Ascending aorta (tissue), 2 donors: ENCODE measurements at regions of chr16 and their contacts with region 1.

Region 1: GRCh38 chr16:70746708-70747424 is 54.1 kb downstream of the VAC14 start:
- DNase-seq: peak; percentile 58 to 93
- H3K4me3 ChIP-seq: peak overlapping the region in 1 of 2 donors; percentile 2
- H3K27ac ChIP-seq: peak overlapping the region; percentile 91 to 92
- H3K4me1 ChIP-seq: peaks cover 13 to 49% of the 10 kb centered on the region in 2 donors
- H3K27me3 ChIP-seq: no peaks in the 10 kb centered on the region
- CTCF ChIP-seq: no peak

Region 2: GRCh38 chr16:70529051-70529777 is 217.7 kb before region 1 on chr16:
- intact Hi-C with region 1: loop called (anchors 5 kb)
- DNase-seq: no peak
- H3K4me3 ChIP-seq: no peak overlapping the region
- H3K27ac ChIP-seq: no peak overlapping the region
- H3K4me1 ChIP-seq: peaks cover 8 to 24% of the 10 kb centered on the region in 2 donors
- H3K27me3 ChIP-seq: no peaks in the 10 kb centered on the region
- CTCF ChIP-seq: peak; percentile 37 to 52 (median 51)

Region 3: GRCh38 chr16:70576431-70577255 is 170.2 kb before region 1 on chr16:
- intact Hi-C with region 1: loop called (anchors 10 kb)
- DNase-seq: peak in 1 of 2 donors; percentile 46
- H3K4me3 ChIP-seq: no peak overlapping the region
- H3K27ac ChIP-seq: peak overlapping the region; percentile 77 to 79
- H3K4me1 ChIP-seq: peaks cover 15 to 60% of the 10 kb centered on the region in 2 donors
- H3K27me3 ChIP-seq: no peaks in the 10 kb centered on the region
- CTCF ChIP-seq: no peak

Region 4: DNA sequence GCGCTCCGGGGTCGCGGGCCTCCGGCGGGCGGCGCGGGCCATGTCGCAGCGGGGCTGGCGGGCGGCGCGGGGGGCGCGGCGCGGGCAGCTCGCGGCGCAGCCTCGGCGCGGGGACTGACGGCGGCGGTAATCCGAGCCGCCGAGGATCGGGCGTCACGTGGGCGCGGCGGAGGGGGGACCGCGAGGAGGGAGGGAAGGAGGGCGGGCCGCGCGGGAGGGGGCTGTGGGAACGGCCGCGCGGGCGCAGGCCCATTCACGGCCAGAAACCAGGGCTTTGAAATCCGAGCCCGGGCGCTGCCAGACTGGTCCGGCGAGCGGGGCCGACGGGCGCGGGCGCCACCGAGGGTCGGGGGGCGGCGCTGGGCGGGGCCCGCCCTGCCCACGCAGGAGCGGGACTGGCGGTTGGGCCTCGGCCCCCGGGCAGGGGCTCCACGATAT is 60.9 kb before region 1 on chr16 and contains the start of gene MTSS2:
- intact Hi-C with region 1: loop called (anchors 2 kb)
- DNase-seq: peak in 1 of 2 donors; percentile 90
- H3K4me3 ChIP-seq: peak within 1 kb of the TSS; percentile 89 to 91
- H3K27ac ChIP-seq: peak within 1 kb of the TSS; percentile 96 to 97
- H3K4me1 ChIP-seq: peaks cover 36 to 84% of the 10 kb centered on the region in 2 donors
- H3K27me3 ChIP-seq: no peaks in the 10 kb centered on the region
- CTCF ChIP-seq: no peak
- total RNA-seq, gene MTSS2: 98.6 TPM

Region 5: DNA sequence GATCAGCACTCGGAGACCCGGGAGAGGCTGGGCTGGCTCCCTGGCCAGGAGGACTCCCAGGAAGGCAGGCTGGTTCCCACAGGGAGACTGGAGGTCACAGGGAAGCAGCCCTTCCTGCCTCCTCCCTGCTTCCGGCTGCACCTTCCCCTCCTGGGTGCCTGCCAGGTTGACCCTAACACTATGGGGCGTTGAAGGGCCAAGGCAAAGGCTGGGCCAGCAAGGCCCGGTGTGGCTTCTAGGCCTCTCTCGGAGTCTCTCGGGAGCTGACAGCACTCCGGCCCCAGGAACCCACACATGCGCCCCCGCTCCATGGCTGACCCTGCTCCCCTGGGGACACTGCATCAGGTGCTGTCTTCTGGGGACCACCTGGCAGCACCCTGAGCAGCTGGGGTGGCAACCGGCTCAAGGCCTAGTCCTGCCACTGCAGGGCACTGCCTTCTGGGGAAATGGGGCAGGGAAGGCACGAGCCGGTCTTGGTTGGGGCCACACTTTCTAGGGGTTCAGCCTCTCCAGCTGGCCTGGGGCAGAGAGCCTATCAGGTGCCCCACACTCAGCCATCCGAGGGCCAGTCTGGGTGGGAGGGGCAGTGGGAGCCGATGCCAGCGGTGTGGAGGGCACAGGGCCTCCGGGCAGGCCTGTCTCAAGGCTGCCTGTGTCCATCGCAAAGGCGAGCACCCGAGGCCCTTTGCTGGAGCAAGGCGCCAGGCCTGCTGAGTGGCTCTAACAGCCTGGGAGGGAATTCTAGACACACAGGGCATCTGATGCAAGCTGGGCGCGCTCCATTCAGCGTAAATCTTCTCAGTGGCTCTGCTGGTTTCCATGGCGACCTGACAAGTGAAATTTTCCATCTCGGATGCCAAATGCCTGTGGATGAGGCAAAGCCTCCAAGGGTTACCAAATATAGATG is 55.4 kb before region 1 on chr16:
- intact Hi-C with region 1: loop called (anchors 2 kb)
- DNase-seq: peak; percentile 82 to 97
- H3K4me3 ChIP-seq: no peak overlapping the region
- H3K27ac ChIP-seq: peak overlapping the region; percentile 96 to 97
- H3K4me1 ChIP-seq: peaks cover 49 to 86% of the 10 kb centered on the region in 2 donors
- H3K27me3 ChIP-seq: no peaks in the 10 kb centered on the region
- CTCF ChIP-seq: no peak

Region 6: DNA sequence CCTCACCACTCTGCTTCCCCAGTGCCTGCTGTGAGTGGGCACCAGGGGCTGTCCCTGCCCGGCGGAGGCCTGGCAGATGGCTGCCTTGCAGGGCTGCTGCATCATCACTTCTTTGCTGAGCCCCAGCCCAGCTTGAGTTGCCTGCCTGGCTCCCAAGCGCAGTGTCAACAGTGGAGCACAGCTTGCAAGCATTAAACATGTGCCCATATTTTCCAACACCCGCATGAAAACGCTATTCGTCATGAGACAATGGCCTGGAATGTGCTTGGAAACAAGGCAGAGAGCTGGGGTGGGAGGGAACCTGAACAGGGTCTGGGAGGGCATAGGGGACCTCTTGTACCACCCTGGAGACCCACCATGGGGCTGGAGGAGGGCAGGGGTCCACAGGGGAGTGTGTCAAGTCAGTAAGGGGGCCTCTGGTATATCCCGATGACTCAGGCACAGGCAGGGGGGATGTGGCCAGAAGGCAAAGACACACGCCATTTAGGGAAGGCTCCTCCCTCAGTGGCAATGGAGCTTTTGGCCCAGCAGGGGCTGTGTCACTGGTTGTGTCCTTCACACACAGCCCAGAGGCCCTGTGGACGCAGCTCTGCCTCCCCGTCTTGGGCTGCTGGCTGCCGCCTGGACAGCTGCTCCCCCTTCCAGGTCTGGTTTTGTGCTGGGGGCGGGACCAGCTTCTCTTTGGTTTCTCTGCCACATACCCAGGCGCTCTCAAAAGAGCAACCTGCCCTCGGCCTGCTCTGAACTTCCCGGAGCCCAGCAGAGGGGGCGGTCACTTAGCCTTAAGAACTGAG is 43.6 kb before region 1 on chr16:
- intact Hi-C with region 1: loop called (anchors 1 kb)
- DNase-seq: peak; percentile 80 to 93
- H3K4me3 ChIP-seq: no peak overlapping the region
- H3K27ac ChIP-seq: peak overlapping the region; percentile 91 to 96
- H3K4me1 ChIP-seq: peaks cover 33 to 69% of the 10 kb centered on the region in 2 donors
- H3K27me3 ChIP-seq: no peaks in the 10 kb centered on the region
- CTCF ChIP-seq: peak; percentile 43 to 70 (median 52)

Region 7: DNA sequence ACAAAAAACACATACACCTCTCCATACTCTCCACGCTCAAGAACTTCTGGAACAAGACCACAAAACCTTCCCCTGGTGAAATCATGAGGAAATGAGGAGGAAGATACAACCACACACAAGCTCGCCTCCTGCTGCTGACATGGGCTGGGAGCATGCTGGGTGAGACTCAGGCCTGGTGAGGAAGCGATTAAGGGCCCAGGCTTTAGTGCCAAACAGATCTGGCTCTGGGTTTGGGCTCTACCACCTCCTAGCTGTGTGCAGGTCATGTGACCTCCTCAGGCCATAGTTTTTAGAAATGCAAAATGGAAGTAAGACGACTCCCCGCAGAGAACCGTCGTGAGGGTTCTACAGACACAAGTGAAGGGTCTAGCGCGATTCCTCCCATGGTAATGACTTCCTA is 12.8 kb after region 1 on chr16:
- intact Hi-C with region 1: no loop called
- DNase-seq: no peak
- H3K4me3 ChIP-seq: no peak overlapping the region
- H3K27ac ChIP-seq: no peak overlapping the region
- H3K4me1 ChIP-seq: peaks cover 3 to 18% of the 10 kb centered on the region in 2 donors
- H3K27me3 ChIP-seq: no peaks in the 10 kb centered on the region
- CTCF ChIP-seq: no peak

Region 8: DNA sequence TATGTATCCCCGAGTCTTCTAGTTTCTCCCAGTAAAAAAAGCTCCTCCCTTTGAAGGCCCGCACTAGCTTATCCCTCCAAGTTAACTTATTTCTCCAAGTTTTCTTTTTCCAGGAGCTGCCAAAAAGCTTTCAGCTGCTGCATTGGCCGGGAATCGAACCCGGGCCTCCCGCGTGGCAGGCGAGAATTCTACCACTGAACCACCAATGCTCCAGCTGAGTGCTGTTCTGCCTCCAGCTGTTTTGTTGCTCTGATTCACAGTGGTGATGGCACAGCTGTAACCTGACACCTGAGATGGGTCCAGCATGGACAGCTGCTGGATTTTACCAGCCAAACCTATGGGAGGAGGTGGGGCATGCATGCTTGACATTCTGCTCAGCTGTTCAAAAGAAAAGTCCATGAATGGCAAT is 32.0 kb after region 1 on chr16:
- intact Hi-C with region 1: no loop called
- DNase-seq: peak in 1 of 2 donors; percentile 77
- H3K4me3 ChIP-seq: no peak overlapping the region
- H3K27ac ChIP-seq: peak overlapping the region in 1 of 2 donors; percentile 22
- H3K4me1 ChIP-seq: no peaks in the 10 kb centered on the region
- H3K27me3 ChIP-seq: no peaks in the 10 kb centered on the region
- CTCF ChIP-seq: no peak

Region 9: DNA sequence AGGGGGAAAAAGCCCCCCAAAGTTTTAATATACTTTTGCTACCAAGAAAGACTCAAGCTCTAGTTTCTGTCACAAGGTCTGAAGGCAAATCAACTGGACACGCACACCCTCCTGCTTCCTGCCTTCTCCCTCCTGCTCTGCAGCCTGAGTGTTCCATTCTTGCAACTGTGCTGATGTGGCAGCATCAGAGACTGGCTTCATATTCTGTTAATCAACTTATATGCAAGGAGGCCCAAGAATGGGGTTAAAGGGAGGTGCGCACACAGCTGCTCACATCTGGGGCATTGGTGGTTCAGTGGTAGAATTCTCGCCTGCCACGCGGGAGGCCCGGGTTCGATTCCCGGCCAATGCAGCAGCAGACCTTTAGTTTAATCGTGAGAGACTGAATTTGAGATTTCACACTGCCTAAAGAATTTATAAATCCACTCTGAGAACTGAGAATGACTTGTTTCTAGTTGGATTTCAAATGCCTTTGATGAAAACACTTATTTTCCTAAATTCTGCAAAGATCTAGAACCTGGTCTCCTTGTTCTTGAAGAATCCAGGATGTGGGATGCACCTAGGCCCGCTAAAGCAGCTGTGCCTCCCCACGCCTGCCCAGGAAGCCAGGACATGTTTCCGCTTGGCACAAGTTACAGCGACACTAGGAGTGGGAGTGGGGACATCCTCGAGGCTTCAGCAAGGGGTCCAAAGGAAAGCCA is 42.5 kb after region 1 on chr16:
- intact Hi-C with region 1: no loop called
- DNase-seq: no peak
- H3K4me3 ChIP-seq: no peak overlapping the region
- H3K27ac ChIP-seq: no peak overlapping the region
- H3K4me1 ChIP-seq: no peaks in the 10 kb centered on the region
- H3K27me3 ChIP-seq: no peaks in the 10 kb centered on the region
- CTCF ChIP-seq: no peak